A673 (cell line): ENCODE measurements at regions of chr14 and their contacts with region 1.

Region 1: DNA sequence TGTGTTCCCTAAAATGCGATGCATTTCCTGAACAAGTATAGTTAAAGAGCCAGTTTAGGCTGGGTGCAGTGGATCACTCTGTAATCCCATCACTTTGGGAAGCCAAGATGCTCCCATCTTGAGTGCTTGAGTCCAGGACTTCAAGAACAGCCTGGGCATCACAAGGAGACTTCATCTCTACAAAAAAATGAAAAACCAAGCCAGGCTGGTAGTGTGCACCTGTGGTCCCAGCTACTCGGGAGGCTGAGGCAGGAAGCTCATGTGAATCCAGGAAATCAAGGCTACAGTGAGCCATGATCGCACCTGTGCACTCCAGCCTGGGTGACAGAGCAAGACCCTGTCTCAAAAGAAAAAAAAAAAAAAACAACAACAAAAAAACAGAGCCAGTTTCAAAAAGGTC is 26.3 kb downstream of the HECTD1 start:
- DNase-seq: no peak
- H3K4me3 ChIP-seq: no peak overlapping the region
- H3K27ac ChIP-seq: no peak overlapping the region
- H3K4me1 ChIP-seq: no peaks in the 10 kb centered on the region
- H3K27me3 ChIP-seq: no peaks in the 10 kb centered on the region
- CTCF ChIP-seq: no peak

Region 2: DNA sequence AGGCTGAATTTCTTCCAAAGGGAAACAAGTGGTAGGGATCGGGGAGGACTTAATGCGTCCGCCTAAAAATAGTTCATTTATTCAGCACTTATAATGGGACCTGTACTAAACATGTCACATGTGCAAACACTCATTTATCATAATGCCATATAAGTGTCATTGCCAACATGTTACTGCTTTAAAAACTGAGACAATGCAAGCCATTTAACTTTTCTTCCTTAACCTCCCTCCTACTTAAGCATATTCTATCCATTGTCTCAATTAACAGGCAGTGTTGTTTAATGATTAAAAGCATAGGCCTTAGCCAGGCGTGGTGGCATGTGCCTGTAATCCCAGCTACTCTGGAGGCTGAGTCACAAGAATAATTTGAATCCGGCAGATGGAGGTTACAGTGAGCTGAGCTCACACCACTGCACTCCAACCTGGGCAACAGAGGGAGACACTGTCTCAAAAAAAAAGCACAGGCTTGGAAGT is 572.7 kb before region 1 on chr14:
- CTCF ChIA-PET with region 1: no interaction called
- POLR2A ChIA-PET with region 1: no interaction called
- intact Hi-C with region 1: no loop called
- DNase-seq: peak; percentile 23
- H3K4me3 ChIP-seq: no peak overlapping the region
- H3K27ac ChIP-seq: no peak overlapping the region
- H3K4me1 ChIP-seq: no peaks in the 10 kb centered on the region
- H3K27me3 ChIP-seq: no peaks in the 10 kb centered on the region
- CTCF ChIP-seq: no peak

Region 3: DNA sequence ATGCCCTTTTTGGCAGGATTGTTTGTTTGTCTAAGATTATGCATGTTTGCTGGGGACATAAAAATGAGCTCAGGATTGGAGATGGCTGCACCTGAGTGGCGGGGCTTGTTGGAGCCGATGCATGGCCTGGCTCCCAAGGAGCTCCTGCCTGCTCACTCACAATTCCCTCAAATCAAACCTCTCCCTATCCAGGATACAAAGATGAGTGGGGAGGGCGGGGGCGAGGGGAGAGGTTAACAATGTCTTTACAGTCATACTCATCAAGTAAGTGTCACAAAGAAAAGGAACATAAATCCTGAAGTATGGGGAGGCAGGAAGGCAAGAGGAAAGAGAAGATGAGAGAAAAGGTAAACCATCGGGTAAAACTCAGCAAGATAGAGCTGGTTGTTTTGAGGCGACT is 410.9 kb before region 1 on chr14:
- CTCF ChIA-PET with region 1: no interaction called
- POLR2A ChIA-PET with region 1: no interaction called
- intact Hi-C with region 1: no loop called
- DNase-seq: no peak
- H3K4me3 ChIP-seq: no peak overlapping the region
- H3K27ac ChIP-seq: no peak overlapping the region
- H3K4me1 ChIP-seq: no peaks in the 10 kb centered on the region
- H3K27me3 ChIP-seq: peaks cover 30% of the 10 kb centered on the region
- CTCF ChIP-seq: no peak

Region 4: GRCh38 chr14:31166271-31166710 is 15.0 kb before region 1 on chr14:
- CTCF ChIA-PET with region 1: no interaction called
- POLR2A ChIA-PET with region 1: interaction called, 15 read pairs
- intact Hi-C with region 1: no loop called
- DNase-seq: no peak
- H3K4me3 ChIP-seq: no peak overlapping the region
- H3K27ac ChIP-seq: no peak overlapping the region
- H3K4me1 ChIP-seq: peaks cover 6% of the 10 kb centered on the region
- H3K27me3 ChIP-seq: no peaks in the 10 kb centered on the region
- CTCF ChIP-seq: no peak

Region 5: GRCh38 chr14:31229638-31230229 is 48.5 kb after region 1 on chr14:
- CTCF ChIA-PET with region 1: no interaction called
- POLR2A ChIA-PET with region 1: no interaction called
- intact Hi-C with region 1: no loop called
- DNase-seq: peak; percentile 69
- H3K4me3 ChIP-seq: peak overlapping the region; percentile 18
- H3K27ac ChIP-seq: no peak overlapping the region
- H3K4me1 ChIP-seq: peaks cover 4% of the 10 kb centered on the region
- H3K27me3 ChIP-seq: no peaks in the 10 kb centered on the region
- CTCF ChIP-seq: no peak

Region 6: GRCh38 chr14:32542507-32542906 is 1361.2 kb after region 1 on chr14:
- CTCF ChIA-PET with region 1: no interaction called
- POLR2A ChIA-PET with region 1: no interaction called
- intact Hi-C with region 1: no loop called
- DNase-seq: no peak
- H3K4me3 ChIP-seq: no peak overlapping the region
- H3K27ac ChIP-seq: no peak overlapping the region
- H3K4me1 ChIP-seq: no peaks in the 10 kb centered on the region
- H3K27me3 ChIP-seq: peaks cover 3% of the 10 kb centered on the region
- CTCF ChIP-seq: no peak